ENCODE measurements at regions of chr17 and their contacts with region 1.

Region 1: DNA sequence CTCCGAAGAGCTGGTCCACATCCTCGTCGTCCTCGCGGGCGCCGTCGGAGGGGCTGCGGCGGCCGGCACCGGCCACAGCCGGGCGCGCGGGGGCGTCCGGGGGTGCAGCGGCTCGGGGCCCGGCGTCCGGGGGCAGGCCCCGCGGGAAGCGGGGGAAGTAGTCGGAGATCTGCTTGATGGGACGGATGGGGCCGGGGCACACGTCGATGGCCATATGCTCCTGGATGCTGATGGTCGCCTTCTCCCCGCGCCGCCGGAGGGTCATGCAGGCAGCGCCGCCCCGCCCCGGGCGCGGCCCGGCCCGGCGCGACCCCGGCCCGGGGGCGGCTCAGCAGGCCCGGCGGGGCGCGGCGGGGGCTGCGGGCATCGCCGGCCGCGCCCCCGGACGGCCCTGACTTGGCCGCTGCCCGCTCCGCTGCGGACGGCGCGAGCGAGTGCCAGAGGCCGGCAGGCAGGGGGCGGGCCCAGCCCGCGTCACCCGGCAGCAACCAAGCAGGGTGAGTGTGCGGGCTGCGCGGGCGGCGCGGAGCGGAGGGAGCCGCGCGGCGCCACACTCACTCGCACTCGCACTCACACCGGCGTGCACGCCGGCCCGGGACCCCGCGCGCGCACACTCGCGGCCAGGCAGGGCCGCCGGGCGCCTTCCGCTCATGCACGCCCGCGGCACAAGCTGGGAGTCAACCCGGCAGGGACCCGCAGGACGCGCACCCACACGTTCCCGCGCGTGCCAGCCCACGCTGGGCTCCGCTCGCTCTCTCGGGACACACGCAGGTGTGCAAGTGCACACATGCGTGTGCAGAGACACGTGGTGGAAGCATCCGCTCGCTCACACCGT is at the start of gene DOC2B:
- DNase-seq: peak; percentile 80
- ATAC-seq: peak; percentile 82
- total RNA-seq, gene DOC2B: 4.5 TPM

Region 2: GRCh38 chr17:233473-233941 is 52.1 kb after region 1 on chr17:
- intact Hi-C with region 1: loop called (anchors 5 kb)
- DNase-seq: peak; percentile 56
- ATAC-seq: peak; percentile 29

Region 3: GRCh38 chr17:309361-309888 is 128.0 kb after region 1 on chr17:
- intact Hi-C with region 1: loop called (anchors 5 kb)
- DNase-seq: peak; percentile 42
- ATAC-seq: no peak

Measured in Right ventricle myocardium inferior (tissue), 1 donor.